PC-9 (cell line): ENCODE measurements at regions of chr22 and their contacts with region 1.

Region 1: DNA sequence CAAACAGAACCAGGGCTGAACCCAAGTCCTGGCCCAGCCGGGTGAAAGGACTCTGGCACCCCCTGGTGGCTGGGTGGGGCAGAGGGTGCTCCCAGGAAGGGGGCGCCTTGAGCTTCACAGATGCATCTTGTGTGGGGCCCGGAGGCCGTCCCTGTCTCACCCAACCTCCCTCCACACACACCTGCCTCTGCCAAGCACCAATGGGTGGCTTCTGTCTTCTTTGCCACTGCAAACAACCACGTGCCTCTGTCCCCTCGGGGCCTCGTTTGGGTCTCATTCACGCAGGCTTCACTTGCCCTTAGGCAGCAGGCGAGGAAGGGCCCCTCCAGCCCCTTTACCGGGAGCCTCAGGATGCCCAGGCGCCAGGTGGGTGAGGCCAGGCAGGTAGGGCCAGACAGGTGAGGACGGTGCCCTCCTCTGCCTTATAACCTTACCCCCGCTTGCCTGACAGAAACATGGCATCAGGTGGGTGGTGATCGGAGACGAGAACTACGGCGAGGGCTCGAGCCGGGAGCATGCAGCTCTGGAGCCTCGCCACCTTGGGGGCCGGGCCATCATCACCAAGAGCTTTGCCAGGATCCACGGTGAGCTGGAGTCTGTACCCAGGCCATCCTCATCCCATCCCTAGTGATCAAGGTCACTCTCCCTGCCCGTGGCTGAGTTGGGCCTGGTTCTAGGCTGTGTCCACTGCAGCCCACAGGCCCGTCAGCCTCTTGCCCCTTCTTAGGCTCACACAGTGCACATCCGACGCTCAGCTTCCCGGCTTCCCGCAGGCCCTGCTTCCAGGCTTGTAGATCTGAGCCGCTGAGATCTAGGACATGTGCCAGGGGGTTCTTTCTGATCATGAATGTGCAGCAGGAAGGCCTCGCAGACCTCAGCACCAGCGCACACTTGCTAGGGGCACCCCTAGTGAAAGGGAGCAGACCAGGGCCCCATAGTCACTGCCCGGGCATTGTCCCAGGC is 17.2 kb downstream of the POLR3H start:
- DNase-seq: peak in 1 of 2 experiments; percentile 46
- H3K4me3 ChIP-seq: no peak overlapping the region
- H3K27ac ChIP-seq: no peak overlapping the region
- H3K4me1 ChIP-seq: no peaks in the 10 kb centered on the region
- H3K27me3 ChIP-seq: no peaks in the 10 kb centered on the region
- CTCF ChIP-seq: peak; percentile 90

Region 2: GRCh38 chr22:40877488-40877887 is 649.6 kb before region 1 on chr22:
- CTCF ChIA-PET with region 1: no interaction called
- POLR2A ChIA-PET with region 1: interaction called, 32 read pairs
- intact Hi-C with region 1: no loop called
- DNase-seq: no peak
- H3K4me3 ChIP-seq: no peak overlapping the region
- H3K27ac ChIP-seq: no peak overlapping the region
- H3K4me1 ChIP-seq: no peaks in the 10 kb centered on the region
- H3K27me3 ChIP-seq: no peaks in the 10 kb centered on the region
- CTCF ChIP-seq: no peak